Activated T-helper 1 cell treated with anti-CD3 and anti-CD28 coated beads, Interleukin-12 subunit alpha, Interleukin-12 subunit beta, Interleukin-2, Interleukin-4 antibody, amounts not matched to agents 30 ng/mL and 10 ng/mL and 1 ng/mL, durations not matched to agents 14 hours and 24 hours and 36 hours (primary cell): ENCODE measurements at regions of chr13 and their contacts with region 1.

Region 1: DNA sequence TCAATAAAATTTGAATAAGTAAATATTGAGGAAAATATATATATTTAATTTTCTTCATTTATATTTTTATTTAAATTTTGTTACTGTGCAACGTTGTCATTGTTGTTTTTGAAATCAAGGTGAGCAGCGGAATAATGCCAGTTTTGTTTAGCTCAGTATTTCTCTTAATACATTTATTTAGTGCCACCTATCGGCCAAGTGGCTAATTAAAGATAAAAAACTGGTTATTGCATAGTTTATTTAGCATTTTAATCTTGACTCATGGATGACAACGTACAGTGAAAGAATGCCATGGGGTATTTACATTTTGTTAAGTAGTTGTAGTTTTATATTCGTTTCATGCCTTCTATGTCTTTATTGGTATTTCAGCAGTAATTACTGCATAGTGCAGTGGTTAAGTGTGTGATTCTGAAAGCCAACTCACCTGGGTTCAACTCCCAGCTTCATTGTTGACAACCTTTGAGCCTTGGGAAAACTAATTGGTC is 265.9 kb downstream of the MYO16 start:
- DNase-seq: no peak
- H3K4me3 Mint-ChIP-seq: no peak overlapping the region
- H3K27ac Mint-ChIP-seq: no peak overlapping the region
- H3K4me1 Mint-ChIP-seq: peaks cover 13% of the 10 kb centered on the region
- H3K27me3 Mint-ChIP-seq: peaks cover 4% of the 10 kb centered on the region

Region 2: DNA sequence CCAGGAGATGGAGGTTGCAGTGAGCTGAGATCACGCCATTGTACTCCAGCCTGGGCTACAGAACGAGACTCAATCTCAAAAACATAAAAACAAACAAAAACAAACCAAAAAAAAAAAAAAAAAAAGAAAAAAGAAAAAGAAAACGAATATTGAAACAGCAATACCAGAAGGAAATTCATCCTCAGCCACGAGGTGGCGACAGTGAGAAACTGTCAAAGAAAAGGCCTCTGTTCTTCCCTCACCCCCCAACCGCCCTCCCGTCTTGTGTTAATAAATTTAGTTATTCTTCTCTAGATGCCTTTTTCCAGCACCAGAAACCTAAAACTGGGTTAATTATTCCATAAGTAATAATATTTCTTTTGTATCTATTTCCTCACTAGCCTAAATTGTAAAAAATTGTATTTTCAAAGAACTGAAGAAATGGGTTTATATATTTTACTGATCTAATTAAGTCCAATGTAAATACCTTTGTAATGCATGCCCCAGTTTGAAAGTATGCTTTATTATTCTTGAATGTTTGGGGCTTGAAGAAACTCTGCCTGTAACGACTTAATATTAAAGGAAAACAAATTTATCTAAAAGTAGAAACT is 718.5 kb before region 1 on chr13:
- intact Hi-C with region 1: loop called (anchors 1 kb)
- DNase-seq: peak; percentile 2
- H3K4me3 Mint-ChIP-seq: no peak overlapping the region
- H3K27ac Mint-ChIP-seq: no peak overlapping the region
- H3K4me1 Mint-ChIP-seq: no peaks in the 10 kb centered on the region
- H3K27me3 Mint-ChIP-seq: peaks cover 4% of the 10 kb centered on the region

Region 3: GRCh38 chr13:108227651-108228272 is 667.5 kb before region 1 on chr13:
- intact Hi-C with region 1: loop called (anchors 2 kb)
- DNase-seq: no peak
- H3K4me3 Mint-ChIP-seq: no peak overlapping the region
- H3K27ac Mint-ChIP-seq: no peak overlapping the region
- H3K4me1 Mint-ChIP-seq: peaks cover 31% of the 10 kb centered on the region
- H3K27me3 Mint-ChIP-seq: no peaks in the 10 kb centered on the region

Region 4: GRCh38 chr13:108322206-108322824 is 572.9 kb before region 1 on chr13:
- intact Hi-C with region 1: loop called (anchors 1 kb)
- DNase-seq: no peak
- H3K4me3 Mint-ChIP-seq: no peak overlapping the region
- H3K27ac Mint-ChIP-seq: no peak overlapping the region
- H3K4me1 Mint-ChIP-seq: no peaks in the 10 kb centered on the region
- H3K27me3 Mint-ChIP-seq: peaks cover 15% of the 10 kb centered on the region

Region 5: DNA sequence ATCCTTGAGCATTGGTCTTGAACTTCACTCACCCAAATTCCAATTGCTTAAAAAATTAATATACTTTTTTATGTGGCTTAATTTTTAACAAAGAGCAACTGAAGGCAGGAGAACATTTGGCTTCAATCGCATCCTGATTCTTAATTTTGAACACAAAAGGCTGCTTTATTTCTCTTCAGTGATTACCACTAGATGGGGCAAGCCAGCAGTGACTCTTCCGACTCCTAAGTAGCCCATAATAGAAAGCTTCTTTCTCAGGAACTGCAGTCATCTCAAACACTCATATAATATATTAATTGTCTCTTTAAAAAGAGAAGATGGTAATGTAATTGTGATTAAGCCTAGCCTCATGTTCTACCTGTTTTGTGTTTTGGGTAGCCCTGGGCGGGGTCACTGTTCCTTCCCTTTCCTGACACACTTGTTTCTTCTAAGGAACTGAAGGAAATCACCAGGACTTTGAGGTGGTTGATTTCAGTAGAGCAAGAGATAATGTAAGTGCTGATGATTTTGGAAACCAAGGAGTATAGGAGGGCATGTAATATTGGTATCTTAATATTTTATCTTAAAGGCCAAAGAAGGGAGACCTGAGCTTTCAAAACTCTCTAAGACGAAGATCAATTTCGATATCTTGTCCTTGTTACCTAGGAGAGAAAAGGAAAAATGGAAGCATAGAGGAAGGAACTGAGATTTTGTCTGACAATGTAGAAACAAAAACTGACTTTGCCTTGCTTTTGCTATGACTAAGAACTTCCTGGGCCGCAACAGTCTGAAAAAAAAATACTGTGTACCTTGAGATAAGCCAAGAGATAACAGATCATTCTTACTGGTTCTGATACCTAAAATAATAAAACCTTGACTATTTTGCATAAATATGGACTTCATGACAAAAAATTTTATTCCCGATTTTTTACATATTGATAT is 552.6 kb before region 1 on chr13:
- intact Hi-C with region 1: loop called (anchors 5 kb)
- DNase-seq: no peak
- H3K4me3 Mint-ChIP-seq: no peak overlapping the region
- H3K27ac Mint-ChIP-seq: no peak overlapping the region
- H3K4me1 Mint-ChIP-seq: peaks cover 9% of the 10 kb centered on the region
- H3K27me3 Mint-ChIP-seq: peaks cover under 1% of the 10 kb centered on the region

Region 6: DNA sequence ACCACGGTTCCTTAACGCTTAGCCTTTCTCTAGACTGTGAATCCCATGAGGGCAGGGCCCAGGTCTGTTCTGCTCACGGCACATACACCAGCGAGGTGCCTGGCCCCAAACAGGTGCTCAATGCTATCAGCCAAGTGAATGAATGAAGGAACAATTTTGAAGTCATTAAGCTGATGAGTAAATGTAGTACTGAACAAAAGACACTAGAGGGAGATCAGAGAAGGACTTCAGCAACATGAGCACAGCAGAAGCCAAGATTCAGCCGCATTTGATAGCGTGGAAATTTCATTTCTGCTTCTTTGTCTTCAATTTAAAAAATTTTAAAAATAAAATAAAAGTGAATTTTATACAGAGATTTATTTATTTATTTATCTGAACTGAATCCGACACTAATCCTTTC is 285.9 kb before region 1 on chr13:
- intact Hi-C with region 1: loop called (anchors 5 kb)
- DNase-seq: no peak
- H3K4me3 Mint-ChIP-seq: no peak overlapping the region
- H3K27ac Mint-ChIP-seq: no peak overlapping the region
- H3K4me1 Mint-ChIP-seq: no peaks in the 10 kb centered on the region
- H3K27me3 Mint-ChIP-seq: no peaks in the 10 kb centered on the region

Region 7: GRCh38 chr13:108725471-108725870 is 169.8 kb before region 1 on chr13:
- intact Hi-C with region 1: no loop called
- DNase-seq: no peak
- H3K4me3 Mint-ChIP-seq: no peak overlapping the region
- H3K27ac Mint-ChIP-seq: no peak overlapping the region
- H3K4me1 Mint-ChIP-seq: no peaks in the 10 kb centered on the region
- H3K27me3 Mint-ChIP-seq: no peaks in the 10 kb centered on the region

Region 8: GRCh38 chr13:108915634-108916512 is 20.6 kb after region 1 on chr13:
- intact Hi-C with region 1: loop called (anchors 2 kb)
- DNase-seq: peak; percentile 72
- H3K4me3 Mint-ChIP-seq: peak overlapping the region; percentile 80
- H3K27ac Mint-ChIP-seq: peak overlapping the region; percentile 97
- H3K4me1 Mint-ChIP-seq: peaks cover 30% of the 10 kb centered on the region
- H3K27me3 Mint-ChIP-seq: peaks cover 2% of the 10 kb centered on the region

Region 9: DNA sequence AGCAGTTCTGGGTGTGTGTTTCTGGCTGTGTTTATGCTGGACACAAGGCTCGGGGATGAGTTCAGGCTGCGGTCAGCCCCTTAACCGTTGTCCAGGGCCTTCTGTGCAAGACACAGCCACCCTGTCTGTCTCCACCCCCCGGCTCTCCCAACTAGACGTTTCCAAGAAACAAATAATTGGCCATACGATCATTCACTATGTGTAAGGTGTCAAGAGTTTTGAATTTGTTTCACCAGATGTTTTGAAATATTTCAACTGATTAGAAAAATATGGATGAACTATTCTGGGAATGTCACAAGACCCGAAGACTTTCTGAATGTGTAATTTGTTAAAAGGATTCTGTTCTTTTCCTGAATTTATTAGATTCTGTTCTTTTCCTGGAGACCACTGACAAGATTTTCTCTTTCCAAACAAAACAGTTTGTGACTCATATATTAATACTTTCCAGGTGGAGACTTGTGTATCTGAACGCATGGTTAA is 52.3 kb after region 1 on chr13:
- intact Hi-C with region 1: no loop called
- DNase-seq: no peak
- H3K4me3 Mint-ChIP-seq: no peak overlapping the region
- H3K27ac Mint-ChIP-seq: no peak overlapping the region
- H3K4me1 Mint-ChIP-seq: no peaks in the 10 kb centered on the region
- H3K27me3 Mint-ChIP-seq: peaks cover 2% of the 10 kb centered on the region

Region 10: GRCh38 chr13:109427148-109427547 is 531.9 kb after region 1 on chr13:
- intact Hi-C with region 1: no loop called
- DNase-seq: no peak
- H3K4me3 Mint-ChIP-seq: no peak overlapping the region
- H3K27ac Mint-ChIP-seq: no peak overlapping the region
- H3K4me1 Mint-ChIP-seq: no peaks in the 10 kb centered on the region
- H3K27me3 Mint-ChIP-seq: peaks cover 1% of the 10 kb centered on the region